CD4-positive, alpha-beta T cell (primary cell): ENCODE measurements at regions of chr16 and their contacts with region 1.

Region 1: GRCh38 chr16:11139326-11140097 is 116.5 kb downstream of the SOCS1 start:
- DNase-seq: no peak
- ATAC-seq: no peak
- H3K4me3 ChIP-seq: no peak overlapping the region
- H3K4me3 Mint-ChIP-seq: peak overlapping the region; percentile 83
- H3K27ac ChIP-seq: peak overlapping the region in 1 of 2 donors; percentile 8
- H3K27ac Mint-ChIP-seq: peak overlapping the region; percentile 40
- H3K4me1 ChIP-seq: peaks cover 20% of the 10 kb centered on the region
- H3K4me1 Mint-ChIP-seq: peaks cover 40% of the 10 kb centered on the region
- H3K27me3 ChIP-seq: no peaks in the 10 kb centered on the region
- H3K27me3 Mint-ChIP-seq: no peaks in the 10 kb centered on the region
- CTCF ChIP-seq: no peak

Region 2: GRCh38 chr16:11079652-11080187 is 59.8 kb before region 1 on chr16:
- CTCF ChIA-PET with region 1: no interaction called
- POLR2A ChIA-PET with region 1: no interaction called
- intact Hi-C with region 1: no loop called
- DNase-seq: no peak
- ATAC-seq: peak; percentile 21
- H3K4me3 ChIP-seq: no peak overlapping the region
- H3K4me3 Mint-ChIP-seq: peak overlapping the region; percentile 30
- H3K27ac ChIP-seq: no peak overlapping the region
- H3K27ac Mint-ChIP-seq: peak overlapping the region; percentile 5
- H3K4me1 ChIP-seq: peaks cover 43% of the 10 kb centered on the region
- H3K4me1 Mint-ChIP-seq: peaks cover 37% of the 10 kb centered on the region
- H3K27me3 ChIP-seq: no peaks in the 10 kb centered on the region
- H3K27me3 Mint-ChIP-seq: no peaks in the 10 kb centered on the region
- CTCF ChIP-seq: no peak

Region 3: DNA sequence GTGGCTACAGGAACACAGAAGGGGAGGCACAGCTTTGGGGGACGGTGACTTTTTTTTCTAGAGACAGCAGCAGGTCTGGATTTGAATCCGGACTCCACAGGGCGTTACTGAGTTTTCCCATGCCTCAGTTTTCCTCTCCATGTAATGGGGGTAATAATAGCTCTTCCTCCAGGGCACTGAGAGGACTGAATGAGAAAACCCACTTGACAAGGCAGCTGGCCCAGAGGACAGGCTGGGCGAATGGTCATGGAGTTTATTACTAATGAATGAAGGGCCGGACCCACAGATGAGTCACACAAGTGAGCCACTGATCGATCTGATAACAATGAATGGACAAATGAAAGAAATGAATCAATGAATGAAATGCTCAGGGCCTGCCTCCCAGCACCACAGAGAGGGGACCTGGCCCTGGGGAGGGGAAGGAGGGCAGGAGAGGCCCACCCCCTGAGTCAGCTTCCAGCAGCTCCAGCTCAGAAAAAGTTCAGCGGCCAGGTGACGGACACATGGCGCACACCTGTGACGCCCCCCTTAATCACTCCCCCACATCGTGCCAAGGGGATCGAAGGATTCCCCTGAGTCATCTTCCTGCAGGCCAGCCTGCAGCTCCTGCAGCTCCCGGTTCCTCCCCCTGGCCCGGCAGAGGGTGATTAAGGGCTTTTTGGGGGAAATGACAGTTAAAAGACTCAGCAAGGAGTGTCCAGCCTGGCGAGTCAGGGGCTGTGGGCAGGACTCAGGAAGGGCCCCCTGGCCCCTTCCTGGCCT is 62.2 kb after region 1 on chr16:
- CTCF ChIA-PET with region 1: no interaction called
- POLR2A ChIA-PET with region 1: interaction called, 3 read pairs
- intact Hi-C with region 1: loop called in 1 of 2 experiments (anchors 10 kb)
- DNase-seq: peak in 2 of 14 experiments; percentile 49 to 64
- ATAC-seq: no peak
- H3K4me3 ChIP-seq: no peak overlapping the region
- H3K4me3 Mint-ChIP-seq: no peak overlapping the region
- H3K27ac ChIP-seq: no peak overlapping the region
- H3K27ac Mint-ChIP-seq: no peak overlapping the region
- H3K4me1 ChIP-seq: peaks cover 25% of the 10 kb centered on the region
- H3K4me1 Mint-ChIP-seq: peaks cover 6% of the 10 kb centered on the region
- H3K27me3 ChIP-seq: no peaks in the 10 kb centered on the region
- H3K27me3 Mint-ChIP-seq: no peaks in the 10 kb centered on the region
- CTCF ChIP-seq: no peak